Mammary epithelial cell (primary cell): ENCODE measurements at regions of chr6 and their contacts with region 1.

Region 1: DNA sequence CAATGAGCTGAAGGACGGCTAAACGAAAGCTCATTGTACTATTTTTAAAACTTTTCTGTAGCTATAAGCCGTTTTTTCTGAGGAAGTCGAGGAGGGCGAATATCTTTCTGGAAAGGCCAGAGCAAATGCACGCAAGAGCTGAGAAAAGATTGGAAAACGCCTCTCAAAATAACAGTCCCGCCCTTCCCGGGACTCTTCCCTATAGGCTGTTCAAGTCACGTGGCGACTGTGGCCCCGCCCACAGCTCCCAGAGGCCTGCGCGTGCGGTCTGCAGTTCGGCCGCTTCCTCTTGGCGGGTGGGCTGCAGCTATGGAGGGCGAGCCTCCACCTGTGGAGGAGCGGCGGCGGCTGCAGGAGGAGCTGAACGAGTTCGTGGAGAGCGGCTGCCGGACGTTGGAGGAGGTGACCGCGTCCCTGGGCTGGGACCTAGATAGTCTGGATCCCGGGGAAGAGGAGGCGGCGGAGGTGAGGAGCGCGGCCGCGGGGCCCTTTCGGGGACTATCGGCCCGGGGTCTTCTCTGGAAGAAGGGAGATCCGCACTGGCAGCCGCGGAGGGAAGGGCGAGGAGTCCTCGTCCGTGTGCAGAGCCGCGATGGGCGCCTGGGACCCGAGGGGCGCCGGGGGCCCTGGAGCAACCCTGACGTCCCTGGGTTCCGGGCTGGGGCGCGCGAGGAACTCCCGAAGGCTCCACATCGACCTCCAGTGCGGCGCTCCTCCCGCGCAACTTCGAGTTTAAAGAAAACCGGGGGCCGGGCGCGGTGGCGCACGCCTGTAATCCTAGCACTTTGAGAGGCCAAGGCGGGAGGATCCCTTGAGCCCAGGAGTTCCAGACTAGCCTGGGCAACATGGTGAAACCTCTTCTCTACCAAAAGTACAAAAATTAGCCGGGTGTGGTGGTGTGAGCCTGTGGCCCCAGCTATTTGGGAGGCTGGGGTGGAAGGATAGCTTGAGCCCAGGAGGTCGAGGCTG is at the start of gene SNRNP48:
- DNase-seq: peak; percentile 90
- H3K4me3 ChIP-seq: peak within 1 kb of the TSS; percentile 77 to 88 (median 81)
- H3K27ac ChIP-seq: peak within 1 kb of the TSS; percentile 20
- H3K4me1 ChIP-seq: peaks cover 11% of the 10 kb centered on the region
- H3K27me3 ChIP-seq: no peaks in the 10 kb centered on the region
- CTCF ChIP-seq: no peak
- total RNA-seq, gene SNRNP48: 8.8 to 11.7 TPM

Region 2: GRCh38 chr6:7282097-7282906 is 307.9 kb before region 1 on chr6:
- CTCF ChIA-PET with region 1: no interaction called
- dilution Hi-C with region 1: loop called (anchors 10 kb)
- in situ Hi-C with region 1: no loop called
- intact Hi-C with region 1: no loop called
- DNase-seq: no peak
- H3K4me3 ChIP-seq: no peak overlapping the region
- H3K27ac ChIP-seq: no peak overlapping the region
- H3K4me1 ChIP-seq: no peaks in the 10 kb centered on the region
- H3K27me3 ChIP-seq: no peaks in the 10 kb centered on the region
- CTCF ChIP-seq: no peak

Region 3: GRCh38 chr6:7300926-7301325 is 289.3 kb before region 1 on chr6:
- CTCF ChIA-PET with region 1: no interaction called
- dilution Hi-C with region 1: no loop called
- in situ Hi-C with region 1: loop called (anchors 10 kb)
- intact Hi-C with region 1: no loop called
- DNase-seq: no peak
- H3K4me3 ChIP-seq: no peak overlapping the region
- H3K27ac ChIP-seq: no peak overlapping the region
- H3K4me1 ChIP-seq: no peaks in the 10 kb centered on the region
- H3K27me3 ChIP-seq: no peaks in the 10 kb centered on the region
- CTCF ChIP-seq: no peak

Region 4: DNA sequence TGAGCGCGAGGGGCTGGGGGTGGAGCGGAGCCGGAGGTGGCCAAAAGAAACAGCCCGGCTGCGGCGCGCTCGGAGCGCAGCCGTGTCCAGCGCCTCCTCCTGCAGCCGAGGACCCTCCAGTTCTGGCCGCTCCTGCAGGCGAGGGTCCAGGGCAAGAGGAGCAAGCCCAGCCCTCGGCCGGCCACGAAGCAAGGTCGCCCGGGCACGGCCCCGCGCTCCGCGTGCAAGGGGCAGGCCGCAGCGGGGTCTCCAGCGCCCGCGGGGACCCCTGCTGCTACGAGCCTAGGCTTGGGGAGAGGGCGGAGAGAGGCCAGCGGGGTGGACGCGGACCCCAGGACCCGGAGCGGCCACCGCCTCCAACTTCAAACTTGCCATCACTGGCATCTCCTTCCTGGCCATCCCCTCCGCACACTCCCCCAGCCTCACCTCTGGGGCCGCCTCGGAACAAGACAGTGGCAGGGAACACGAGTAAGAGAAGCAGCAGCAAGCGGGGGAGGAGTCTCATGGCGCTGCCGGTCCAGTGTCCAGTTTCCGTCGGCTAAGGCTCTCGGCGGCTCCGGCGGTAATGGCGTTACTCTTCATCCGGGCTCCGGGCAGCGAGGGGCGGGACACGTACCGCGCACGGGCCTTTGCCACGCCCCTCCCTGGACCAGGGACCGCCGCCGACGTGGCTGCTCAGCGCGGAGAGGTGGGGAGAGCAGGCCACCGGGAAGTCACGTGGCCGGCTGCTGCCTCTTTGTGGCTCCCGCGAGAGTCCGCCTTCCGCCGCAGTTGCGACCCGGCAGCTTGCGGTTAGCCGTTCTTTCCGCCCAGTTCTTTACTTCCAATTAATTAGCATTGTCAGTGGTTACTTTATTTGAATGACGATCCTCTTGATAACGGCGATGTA is 277.4 kb before region 1 on chr6 and contains the start of gene SSR1:
- CTCF ChIA-PET with region 1: no interaction called
- dilution Hi-C with region 1: no loop called
- in situ Hi-C with region 1: loop called (anchors 10 kb)
- intact Hi-C with region 1: loop called (anchors 5 kb)
- DNase-seq: peak; percentile 96
- H3K4me3 ChIP-seq: peak within 1 kb of the TSS; percentile 74 to 97 (median 89)
- H3K27ac ChIP-seq: peak within 1 kb of the TSS; percentile 85
- H3K4me1 ChIP-seq: peaks cover 12% of the 10 kb centered on the region
- H3K27me3 ChIP-seq: no peaks in the 10 kb centered on the region
- CTCF ChIP-seq: no peak
- total RNA-seq, gene SSR1: 93.5 to 179 TPM